Naive thymus-derived CD4-positive, alpha-beta T cell (primary cell): ENCODE measurements at regions of chr20 and their contacts with region 1.

Region 1: GRCh38 chr20:33810885-33811777 is at the start of gene CHMP4B:
- DNase-seq: peak; percentile 94 to 99 (median 98)
- ATAC-seq: peak; percentile 98
- H3K4me3 ChIP-seq: peak within 1 kb of the TSS; percentile 74
- H3K4me3 Mint-ChIP-seq: peak within 1 kb of the TSS; percentile 89 to 100 (median 95)
- H3K27ac ChIP-seq: peak within 1 kb of the TSS; percentile 95
- H3K27ac Mint-ChIP-seq: peak within 1 kb of the TSS; percentile 84 to 96 (median 91)
- H3K4me1 ChIP-seq: peaks cover 22 to 23% of the 10 kb centered on the region in 2 donors
- H3K4me1 Mint-ChIP-seq: peaks cover 36 to 47% (median 42%) of the 10 kb centered on the region in 7 donors
- H3K27me3 ChIP-seq: no peaks in the 10 kb centered on the region
- H3K27me3 Mint-ChIP-seq: peaks cover 0 to 5% (median 0%) of the 10 kb centered on the region in 5 donors
- total RNA-seq, gene CHMP4B: 47.5 to 80.8 (median 54.4) TPM

Region 2: DNA sequence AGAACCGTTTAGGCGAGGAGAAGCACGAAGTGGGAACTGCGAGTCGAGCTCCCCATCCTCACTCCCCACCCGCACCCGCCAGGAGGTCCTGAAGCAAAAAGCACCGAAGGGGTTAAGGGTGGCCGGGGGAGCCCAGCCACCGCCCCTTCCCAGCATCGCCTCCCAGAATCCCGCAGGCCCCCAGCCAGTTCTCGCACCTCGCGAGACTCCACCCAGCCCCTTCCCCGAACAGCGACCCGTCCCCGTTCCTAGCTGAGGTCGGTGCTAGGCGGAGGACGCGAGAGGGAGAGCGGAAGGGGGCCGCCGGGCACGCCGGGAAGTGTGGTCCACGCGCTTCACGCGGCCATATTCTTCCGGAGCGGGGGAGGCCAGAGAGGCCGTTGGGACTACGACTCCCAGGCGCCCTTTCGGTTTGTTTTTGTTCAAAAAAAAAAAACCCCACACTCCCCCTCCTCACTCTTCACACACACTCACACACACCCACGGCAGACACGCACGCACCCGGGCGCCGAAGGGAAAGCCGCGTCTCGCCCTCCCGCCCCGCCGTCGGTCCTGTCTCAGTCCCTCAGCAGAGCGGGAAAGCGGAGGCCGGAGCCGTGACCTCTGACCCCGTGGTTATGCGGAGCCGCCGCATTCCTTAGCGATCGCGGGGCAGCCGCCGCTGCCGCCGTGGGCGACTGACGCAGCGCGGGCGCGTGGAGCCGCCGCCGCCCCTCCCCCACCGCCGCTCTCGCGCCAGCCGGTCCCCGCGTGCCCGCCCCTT is 1453.1 kb before region 1 on chr20 and contains the start of gene ASXL1:
- CTCF ChIA-PET with region 1: no interaction called
- POLR2A ChIA-PET with region 1: no interaction called
- intact Hi-C with region 1: loop called in 1 of 2 experiments (anchors 5 kb)
- DNase-seq: peak; percentile 81 to 96 (median 95)
- ATAC-seq: peak; percentile 94
- H3K4me3 ChIP-seq: peak within 1 kb of the TSS; percentile 95
- H3K4me3 Mint-ChIP-seq: peak within 1 kb of the TSS; percentile 87 to 99 (median 96)
- H3K27ac ChIP-seq: peak within 1 kb of the TSS; percentile 98
- H3K27ac Mint-ChIP-seq: peak within 1 kb of the TSS; percentile 97 to 100 (median 99)
- H3K4me1 ChIP-seq: peaks cover 10 to 27% of the 10 kb centered on the region in 2 donors
- H3K4me1 Mint-ChIP-seq: peaks cover 38 to 65% (median 45%) of the 10 kb centered on the region in 7 donors
- H3K27me3 ChIP-seq: no peaks in the 10 kb centered on the region
- H3K27me3 Mint-ChIP-seq: no peaks in the 10 kb centered on the region
- total RNA-seq, gene ASXL1: 106 to 200 (median 158) TPM

Region 3: DNA sequence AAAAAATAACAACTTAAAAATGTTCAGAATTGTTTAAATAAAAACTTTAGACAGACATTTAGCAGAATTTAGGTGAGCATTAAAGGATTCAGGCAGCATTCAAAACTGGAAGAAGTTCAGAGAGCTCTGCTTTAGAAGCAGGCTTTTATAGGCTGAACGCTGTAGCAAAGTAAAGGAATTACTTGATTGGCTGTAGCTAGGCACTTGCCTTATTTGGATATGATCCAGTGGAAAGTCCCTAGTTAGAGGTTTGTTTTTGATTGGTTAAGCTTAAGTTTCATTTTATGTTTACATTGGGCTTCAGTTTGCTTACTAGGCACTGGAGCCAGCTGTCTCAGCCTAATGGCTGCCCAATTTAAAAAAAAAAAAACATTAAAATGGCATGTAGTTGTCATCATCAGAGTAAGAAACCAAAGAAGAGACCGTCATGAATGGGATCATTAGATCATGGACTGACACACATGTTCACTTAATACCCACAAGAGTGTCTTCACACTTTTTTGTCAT is 256.2 kb before region 1 on chr20:
- CTCF ChIA-PET with region 1: no interaction called
- POLR2A ChIA-PET with region 1: no interaction called
- intact Hi-C with region 1: loop called in 1 of 2 experiments (anchors 1 kb)
- DNase-seq: peak in 7 of 9 donors; percentile 72 to 92 (median 88)
- ATAC-seq: peak; percentile 98
- H3K4me3 ChIP-seq: peak overlapping the region; percentile 3
- H3K4me3 Mint-ChIP-seq: peak overlapping the region; percentile 51 to 83 (median 75)
- H3K27ac ChIP-seq: peak overlapping the region; percentile 81
- H3K27ac Mint-ChIP-seq: peak overlapping the region; percentile 90 to 98 (median 95)
- H3K4me1 ChIP-seq: peaks cover 16% of the 10 kb centered on the region in 2 donors
- H3K4me1 Mint-ChIP-seq: peaks cover 15 to 49% (median 39%) of the 10 kb centered on the region in 7 donors
- H3K27me3 ChIP-seq: no peaks in the 10 kb centered on the region
- H3K27me3 Mint-ChIP-seq: no peaks in the 10 kb centered on the region

Region 4: DNA sequence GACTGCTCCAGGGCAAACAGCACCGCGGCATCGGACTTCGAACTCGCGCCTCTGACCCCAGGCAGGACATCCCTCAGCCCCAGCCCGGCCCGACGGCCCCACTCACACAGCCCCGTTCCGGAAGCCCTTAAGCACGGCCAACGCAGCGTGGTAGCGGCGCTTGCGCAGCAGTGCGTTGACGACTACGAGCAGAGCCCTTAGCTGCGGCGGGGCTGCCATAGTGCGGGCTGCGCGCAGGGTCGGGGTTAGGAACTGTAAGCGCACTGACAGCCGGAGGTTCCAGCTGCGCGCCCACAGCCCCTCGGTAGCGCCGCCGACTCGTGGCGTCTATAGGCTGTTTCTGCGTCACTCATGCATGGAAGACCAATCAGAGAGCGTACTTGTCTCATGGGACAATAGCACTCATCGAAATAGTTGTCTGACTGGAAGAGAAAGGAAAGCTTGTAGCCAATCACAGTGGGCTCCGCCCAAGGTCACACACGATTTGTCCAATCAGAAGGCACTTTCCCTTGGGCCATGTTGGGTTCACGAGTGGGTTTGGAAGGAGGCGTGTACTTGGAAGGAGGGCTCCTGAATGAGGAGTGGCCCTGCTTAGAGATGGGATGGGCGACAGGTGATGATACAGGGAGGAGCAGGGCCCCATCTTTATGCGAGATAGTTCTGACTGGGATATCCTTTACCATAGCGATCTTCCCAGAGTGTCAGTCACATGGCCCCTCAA is 91.0 kb before region 1 on chr20 and contains the start of gene PXMP4:
- CTCF ChIA-PET with region 1: no interaction called
- POLR2A ChIA-PET with region 1: interaction called, 3 read pairs
- intact Hi-C with region 1: loop called (anchors 1 kb)
- DNase-seq: peak; percentile 60 to 97 (median 94)
- ATAC-seq: peak; percentile 98
- H3K4me3 ChIP-seq: peak within 1 kb of the TSS; percentile 87
- H3K4me3 Mint-ChIP-seq: peak within 1 kb of the TSS; percentile 81 to 95 (median 90)
- H3K27ac ChIP-seq: peak within 1 kb of the TSS; percentile 74
- H3K27ac Mint-ChIP-seq: peak within 1 kb of the TSS; percentile 81 to 97 (median 87)
- H3K4me1 ChIP-seq: peaks cover 0 to 22% of the 10 kb centered on the region in 2 donors
- H3K4me1 Mint-ChIP-seq: peaks cover 22 to 36% (median 27%) of the 10 kb centered on the region in 7 donors
- H3K27me3 ChIP-seq: no peaks in the 10 kb centered on the region
- H3K27me3 Mint-ChIP-seq: no peaks in the 10 kb centered on the region
- total RNA-seq, gene PXMP4: 4.5 to 14.3 (median 10.1) TPM

Region 5: GRCh38 chr20:33862709-33863403 is 51.7 kb after region 1 on chr20:
- CTCF ChIA-PET with region 1: interaction called, 5 read pairs
- POLR2A ChIA-PET with region 1: interaction called, 13 read pairs
- intact Hi-C with region 1: no loop called
- DNase-seq: peak in 8 of 9 donors; percentile 23 to 58 (median 43)
- ATAC-seq: peak; percentile 64
- H3K4me3 ChIP-seq: no peak overlapping the region
- H3K4me3 Mint-ChIP-seq: no peak overlapping the region
- H3K27ac ChIP-seq: no peak overlapping the region
- H3K27ac Mint-ChIP-seq: no peak overlapping the region
- H3K4me1 ChIP-seq: peaks cover 18 to 26% of the 10 kb centered on the region in 2 donors
- H3K4me1 Mint-ChIP-seq: peaks cover 18 to 31% (median 27%) of the 10 kb centered on the region in 7 donors
- H3K27me3 ChIP-seq: no peaks in the 10 kb centered on the region
- H3K27me3 Mint-ChIP-seq: peaks cover 0 to 3% (median 0%) of the 10 kb centered on the region in 5 donors

Region 6: DNA sequence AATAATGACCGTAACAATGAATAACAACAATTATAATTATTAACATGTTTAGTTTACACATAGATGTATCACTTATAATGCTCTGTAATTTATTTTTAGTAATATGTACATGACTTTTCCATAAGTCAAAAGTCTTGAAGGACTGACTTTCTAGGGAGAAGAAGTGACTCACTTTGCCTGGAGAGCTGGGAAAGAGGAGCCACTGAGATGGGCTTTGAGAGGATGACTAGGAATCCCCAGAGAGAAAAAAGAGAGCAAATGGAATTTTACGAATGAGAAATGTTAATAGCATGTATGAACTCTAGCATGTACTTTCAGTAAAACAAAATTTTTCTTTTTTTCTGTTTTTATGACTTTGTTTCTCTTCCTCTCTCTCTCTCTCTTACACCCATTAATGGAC is 114.7 kb after region 1 on chr20:
- CTCF ChIA-PET with region 1: no interaction called
- POLR2A ChIA-PET with region 1: no interaction called
- intact Hi-C with region 1: no loop called
- DNase-seq: no peak
- ATAC-seq: no peak
- H3K4me3 ChIP-seq: no peak overlapping the region
- H3K4me3 Mint-ChIP-seq: no peak overlapping the region
- H3K27ac ChIP-seq: no peak overlapping the region
- H3K27ac Mint-ChIP-seq: no peak overlapping the region
- H3K4me1 ChIP-seq: no peaks in the 10 kb centered on the region
- H3K4me1 Mint-ChIP-seq: no peaks in the 10 kb centered on the region
- H3K27me3 ChIP-seq: no peaks in the 10 kb centered on the region
- H3K27me3 Mint-ChIP-seq: peaks cover 0 to 13% (median 0%) of the 10 kb centered on the region in 5 donors

Region 7: GRCh38 chr20:34363062-34363464 is 551.9 kb after region 1 on chr20 and contains the start of gene ITCH:
- CTCF ChIA-PET with region 1: no interaction called
- POLR2A ChIA-PET with region 1: no interaction called
- intact Hi-C with region 1: loop called (anchors 1 to 5 kb)
- DNase-seq: peak; percentile 82 to 91 (median 88)
- ATAC-seq: peak; percentile 100
- H3K4me3 ChIP-seq: peak within 1 kb of the TSS; percentile 93
- H3K4me3 Mint-ChIP-seq: peak within 1 kb of the TSS; percentile 96 to 100 (median 98)
- H3K27ac ChIP-seq: peak within 1 kb of the TSS; percentile 98
- H3K27ac Mint-ChIP-seq: peak within 1 kb of the TSS; percentile 91 to 100 (median 98)
- H3K4me1 ChIP-seq: peaks cover 25 to 38% of the 10 kb centered on the region in 2 donors
- H3K4me1 Mint-ChIP-seq: peaks cover 26 to 50% (median 45%) of the 10 kb centered on the region in 7 donors
- H3K27me3 ChIP-seq: no peaks in the 10 kb centered on the region
- H3K27me3 Mint-ChIP-seq: peaks cover 0 to 3% (median 0%) of the 10 kb centered on the region in 5 donors
- total RNA-seq, gene ITCH: 50.8 to 70.4 (median 60.5) TPM

Region 8: DNA sequence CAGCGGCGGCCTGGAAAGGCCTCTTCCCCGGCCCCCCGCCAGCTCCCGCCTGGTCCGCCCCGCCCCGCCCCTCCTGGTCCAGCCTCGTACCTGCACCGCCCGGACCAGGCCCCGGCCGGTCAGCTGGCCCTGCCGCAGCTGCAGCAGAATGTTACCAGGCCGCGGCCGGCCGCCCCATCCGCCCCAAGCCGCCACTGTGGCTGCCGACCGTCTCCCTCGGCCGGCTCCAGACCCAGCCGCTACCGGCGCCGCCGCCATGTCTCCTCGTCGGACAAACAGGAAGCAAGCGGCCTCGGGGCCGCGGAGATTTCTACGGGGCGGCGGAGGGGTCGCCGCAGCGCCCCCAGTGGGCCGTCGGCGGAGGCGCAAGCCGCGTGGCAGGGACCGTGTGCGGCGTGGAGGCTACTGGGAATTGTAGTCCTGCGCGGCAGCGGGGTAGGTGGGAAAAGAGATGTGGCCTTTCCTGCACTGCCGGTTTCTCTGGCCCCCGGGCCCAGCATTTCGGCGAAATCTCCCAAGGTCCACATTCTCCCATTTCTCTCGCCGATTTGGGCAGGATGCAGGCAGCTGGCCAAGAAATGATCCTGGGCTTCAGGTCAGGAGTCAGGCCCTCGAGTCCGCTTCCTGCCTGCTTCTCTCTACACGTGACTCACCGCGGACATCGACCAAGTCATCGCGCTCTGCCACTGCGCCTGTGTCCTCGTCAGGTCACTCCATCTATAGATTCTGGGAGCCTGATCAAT is 1281.6 kb after region 1 on chr20 and contains the start of gene TRPC4AP:
- CTCF ChIA-PET with region 1: no interaction called
- POLR2A ChIA-PET with region 1: no interaction called
- intact Hi-C with region 1: loop called in 1 of 2 experiments (anchors 2 kb)
- DNase-seq: peak; percentile 83 to 90 (median 87)
- ATAC-seq: peak; percentile 99
- H3K4me3 ChIP-seq: peak within 1 kb of the TSS; percentile 77
- H3K4me3 Mint-ChIP-seq: peak within 1 kb of the TSS; percentile 87 to 98 (median 90)
- H3K27ac ChIP-seq: peak within 1 kb of the TSS; percentile 89
- H3K27ac Mint-ChIP-seq: peak within 1 kb of the TSS; percentile 81 to 98 (median 94)
- H3K4me1 ChIP-seq: peaks cover 15 to 22% of the 10 kb centered on the region in 2 donors
- H3K4me1 Mint-ChIP-seq: peaks cover 27 to 54% (median 51%) of the 10 kb centered on the region in 7 donors
- H3K27me3 ChIP-seq: no peaks in the 10 kb centered on the region
- H3K27me3 Mint-ChIP-seq: no peaks in the 10 kb centered on the region
- total RNA-seq, gene TRPC4AP: 50.5 to 66.0 (median 60.6) TPM